ENCODE measurements at regions of chr13 and their contacts with region 1.

Region 1: DNA sequence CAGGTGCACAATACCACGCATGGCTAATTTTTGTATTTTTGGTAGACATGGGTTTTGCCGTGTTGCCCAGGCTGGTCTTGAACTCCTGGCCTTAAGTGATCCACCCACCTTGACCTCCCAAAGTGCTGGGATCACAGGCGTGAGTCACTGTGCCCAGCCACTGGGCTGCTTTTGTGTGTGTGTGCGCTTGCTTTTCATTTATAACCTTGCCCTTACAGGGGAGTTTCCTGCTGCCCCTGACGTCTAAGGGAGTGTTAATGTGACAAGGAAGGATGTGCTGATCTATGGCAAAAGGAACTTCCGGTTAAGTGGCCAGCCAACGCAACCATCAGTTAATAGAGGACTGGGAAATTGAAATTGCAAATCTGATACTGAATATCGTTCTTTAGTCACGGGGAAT is 57.7 kb downstream of the ING1 start:
- DNase-seq: no peak

Region 2: DNA sequence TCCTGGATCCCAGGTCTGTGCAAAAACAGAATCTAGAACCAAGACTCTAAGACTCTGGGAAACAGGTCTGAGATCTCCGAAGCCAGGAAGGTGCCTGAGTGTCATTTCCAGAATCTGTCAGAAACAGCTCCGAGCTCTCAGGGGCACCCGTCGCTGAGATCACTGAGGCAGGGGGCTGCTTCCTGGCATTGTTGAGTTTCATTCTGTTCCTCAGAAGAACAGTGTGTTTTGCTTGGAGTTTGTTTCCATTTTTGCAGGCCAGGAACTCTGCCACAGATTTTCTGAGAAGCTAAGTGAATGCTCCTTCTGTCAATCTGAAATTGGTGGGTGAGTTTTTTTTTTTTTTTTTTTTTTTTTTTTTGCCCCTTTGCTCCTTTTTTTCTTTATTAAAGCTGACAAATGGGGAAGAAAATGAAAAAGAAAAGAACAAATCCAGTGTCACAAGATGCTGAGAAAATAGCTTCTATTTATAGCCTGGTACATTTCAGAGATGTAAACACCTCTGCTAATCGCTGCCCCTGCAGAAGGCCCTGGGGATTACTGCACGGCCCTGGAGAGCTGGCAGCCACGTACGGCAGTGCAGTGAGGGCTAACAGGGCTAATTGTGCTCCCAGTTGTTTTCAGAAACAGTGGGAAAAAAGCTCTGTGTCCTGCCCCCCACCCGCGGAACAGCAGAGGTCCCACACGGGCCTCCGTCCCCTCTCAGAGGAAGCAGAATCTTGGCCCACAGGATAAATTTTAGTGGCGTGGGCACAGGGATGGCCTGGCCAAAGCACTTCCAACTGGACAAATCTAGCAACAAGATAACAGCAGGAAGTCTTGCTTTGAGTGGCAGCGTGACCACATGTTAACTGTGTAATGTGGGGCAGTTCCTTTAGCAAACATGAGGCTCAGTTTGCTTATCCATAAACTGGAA is 747.2 kb before region 1 on chr13:
- intact Hi-C with region 1: loop called in 1 of 2 experiments (anchors 10 kb)
- DNase-seq: no peak

Region 3: GRCh38 chr13:110244071-110244830 is 526.9 kb before region 1 on chr13:
- intact Hi-C with region 1: no loop called
- DNase-seq: no peak

Region 4: GRCh38 chr13:110799246-110800236 is 28.3 kb after region 1 on chr13:
- intact Hi-C with region 1: no loop called
- DNase-seq: peak; percentile 90

Measured in posterior vena cava (tissue), 2 donors.